ENCODE measurements at regions of chr12 and their contacts with region 1.

Region 1: DNA sequence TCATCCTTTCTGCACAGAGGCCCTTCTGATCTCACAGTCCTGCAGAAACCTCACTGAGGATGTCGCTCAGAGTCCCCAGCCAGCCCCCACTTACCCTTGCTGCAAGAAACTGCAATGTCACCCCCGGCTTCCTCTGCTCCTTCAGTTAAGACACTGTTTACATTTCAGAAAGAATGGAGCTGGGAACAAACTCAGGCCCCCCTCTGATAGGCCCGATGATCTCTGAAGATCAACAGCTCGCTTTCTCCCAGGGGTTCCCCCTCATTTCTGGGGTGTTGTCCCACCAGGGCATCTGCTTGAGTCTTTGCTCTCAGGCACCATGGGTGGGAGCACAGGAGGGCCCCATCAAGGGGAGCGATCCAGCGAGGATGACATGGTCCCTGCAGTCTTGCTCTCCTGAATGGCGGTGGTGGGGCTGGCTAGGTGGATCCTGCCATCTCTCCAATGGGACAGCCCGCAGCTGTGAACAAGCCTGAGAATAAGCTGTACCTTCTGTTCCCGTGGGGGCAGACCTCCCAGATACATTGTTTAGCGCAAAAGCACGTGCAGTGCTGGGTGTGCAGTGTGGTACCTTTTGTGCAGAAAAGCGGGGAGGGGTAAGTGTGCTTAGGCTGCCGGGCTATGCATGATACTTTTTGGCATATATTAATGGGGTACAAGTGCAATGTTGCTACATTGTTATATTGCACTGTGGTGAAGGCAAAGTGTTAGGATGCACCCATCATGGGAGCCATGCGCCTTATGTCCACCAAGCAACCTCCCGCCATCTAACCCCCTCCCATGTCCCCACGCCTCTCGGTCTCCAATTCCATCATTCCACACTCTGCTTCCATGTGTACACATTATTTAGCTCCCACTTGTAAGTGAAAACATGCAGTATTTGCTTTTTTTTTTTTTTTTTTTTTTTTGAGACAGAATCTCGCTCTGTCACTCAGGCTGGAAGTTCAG is 6.7 kb upstream of the NCOR2 start:
- DNase-seq: no peak

Region 2: GRCh38 chr12:124217508-124218237 is 356.4 kb before region 1 on chr12:
- intact Hi-C with region 1: no loop called
- DNase-seq: no peak

Region 3: DNA sequence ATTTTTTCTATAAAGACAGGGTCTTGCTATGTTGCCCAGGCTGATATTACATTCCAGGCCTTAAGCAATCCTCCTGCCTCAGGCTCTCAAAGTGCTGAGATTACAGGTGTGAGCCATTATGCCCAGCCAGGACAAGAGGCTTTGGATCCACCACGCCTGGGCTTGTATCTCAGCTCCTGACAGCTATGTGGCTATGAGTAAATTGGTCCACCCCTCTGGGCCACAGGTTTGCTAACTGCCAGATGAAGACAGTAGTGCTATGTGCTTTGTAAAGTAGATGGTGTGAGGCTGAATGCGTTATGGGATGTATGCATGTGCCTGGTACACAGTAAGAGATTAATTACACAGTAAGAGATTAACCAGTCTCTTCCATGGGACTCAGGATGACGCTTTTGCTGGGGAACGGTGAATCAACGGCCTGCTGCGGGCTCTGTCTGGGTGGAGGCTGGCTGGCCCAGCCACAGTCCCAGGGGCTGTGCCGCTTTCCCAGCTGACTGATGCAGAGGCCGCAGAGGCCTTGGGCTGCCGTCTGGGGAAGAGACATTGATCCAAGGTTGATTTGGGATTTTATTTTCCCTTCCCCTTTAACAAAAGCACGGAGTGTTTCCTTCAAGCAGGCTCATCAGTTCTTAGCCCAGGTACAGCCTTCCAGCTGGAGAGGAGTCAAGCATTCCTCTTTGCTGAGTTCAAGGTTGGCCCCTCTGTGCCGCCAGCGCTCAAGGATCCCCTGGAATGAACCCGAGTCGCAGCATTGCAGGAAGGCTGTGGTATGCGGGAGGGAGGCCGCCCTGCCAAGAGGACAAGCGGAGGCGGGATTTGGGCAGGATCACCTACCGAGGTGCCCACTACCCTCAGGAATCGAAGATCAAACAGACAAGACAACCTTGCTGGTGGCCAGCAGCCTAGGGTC is 46.9 kb after region 1 on chr12:
- intact Hi-C with region 1: loop called (anchors 1 to 5 kb)
- DNase-seq: peak; percentile 89